AG04450 (cell line): ENCODE measurements at regions of chr9 and their contacts with region 1.

Region 1: GRCh38 chr9:4762108-4762885 is 21.3 kb upstream of the AK3 start:
- DNase-seq: peak; percentile 44
- H3K4me3 ChIP-seq: no peak overlapping the region
- H3K27ac ChIP-seq: no peak overlapping the region
- H3K27me3 ChIP-seq: peaks cover 8% of the 10 kb centered on the region
- CTCF ChIP-seq: peak; percentile 80

Region 2: DNA sequence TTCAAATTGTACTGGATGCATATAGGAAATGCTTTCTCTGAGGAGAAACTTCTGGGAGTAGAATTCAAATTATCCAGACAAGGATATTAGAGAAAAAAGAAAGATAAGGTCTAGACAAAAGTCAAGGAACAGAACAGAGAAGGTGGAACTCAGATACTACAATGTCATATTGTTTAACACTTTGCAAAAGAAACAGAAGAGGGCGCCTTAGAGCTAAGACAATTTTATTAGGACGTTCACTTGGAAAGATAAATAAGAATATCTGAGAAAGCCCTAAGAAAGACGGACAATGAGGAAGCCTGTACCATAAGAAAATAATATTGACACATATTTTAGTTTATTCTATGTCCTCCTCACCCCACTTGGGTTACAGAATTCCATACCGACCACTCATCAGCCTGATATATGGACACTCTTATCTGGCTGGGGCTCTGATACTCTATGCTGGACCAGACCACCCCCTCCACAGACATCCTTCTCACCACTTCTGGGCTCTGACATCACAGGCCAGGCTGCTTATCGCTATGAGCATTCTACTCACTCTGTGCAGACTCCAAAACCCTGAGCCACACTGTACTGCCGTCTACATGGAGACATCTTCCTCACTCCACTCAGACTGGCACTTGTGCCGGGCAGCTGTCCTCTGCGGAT is 12.1 kb before region 1 on chr9:
- CTCF ChIA-PET with region 1: interaction called, 22 read pairs
- POLR2A ChIA-PET with region 1: no interaction called
- DNase-seq: peak; percentile 11
- H3K4me3 ChIP-seq: no peak overlapping the region
- H3K27ac ChIP-seq: no peak overlapping the region
- H3K27me3 ChIP-seq: no peaks in the 10 kb centered on the region
- CTCF ChIP-seq: peak; percentile 62

Region 3: DNA sequence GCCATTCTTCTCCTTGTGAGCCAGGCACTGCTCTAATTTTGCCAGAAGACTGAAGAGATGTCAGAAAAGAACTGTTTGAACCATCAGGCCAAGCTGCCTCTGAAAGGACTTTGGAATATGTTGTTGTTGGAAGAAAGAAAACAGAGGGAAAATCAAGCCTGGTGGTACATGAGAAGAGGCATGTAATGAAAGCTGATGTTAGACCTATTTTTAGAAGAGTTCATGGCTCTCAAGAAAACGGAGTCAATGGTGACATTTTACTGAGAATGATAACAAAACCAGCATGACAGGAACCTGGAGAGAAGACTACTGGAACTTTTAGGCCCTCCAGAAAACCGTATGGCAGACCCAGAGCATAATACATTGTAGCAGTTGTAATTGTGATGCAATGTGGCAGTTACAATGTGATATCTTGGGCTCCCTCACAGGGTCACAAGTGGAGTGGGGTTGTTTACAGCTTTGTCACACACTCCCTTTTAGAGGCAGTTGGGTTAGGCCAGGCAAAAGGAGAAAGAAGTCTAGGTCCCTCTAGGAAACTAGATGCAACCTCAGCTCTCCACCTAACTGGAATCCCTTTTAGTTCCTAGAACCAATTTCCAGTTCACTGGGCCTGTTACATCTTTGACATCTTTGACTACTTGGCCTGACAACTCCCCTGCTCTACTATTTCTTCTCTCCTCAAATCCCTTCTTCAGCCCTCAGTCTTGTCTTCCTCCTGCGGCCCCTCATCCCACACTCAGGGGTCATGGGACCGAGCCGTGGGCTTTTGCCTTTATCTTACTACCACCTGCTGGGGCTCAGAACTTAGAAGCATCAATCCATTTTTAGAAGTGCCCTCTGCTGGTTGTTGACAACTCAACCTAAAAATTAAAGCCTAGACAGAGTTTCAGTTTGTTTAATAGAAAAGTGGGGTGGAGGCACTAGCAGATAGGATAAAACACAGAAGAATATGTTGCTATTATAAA is 161.6 kb after region 1 on chr9:
- CTCF ChIA-PET with region 1: interaction called, 59 read pairs
- POLR2A ChIA-PET with region 1: no interaction called
- DNase-seq: no peak
- H3K4me3 ChIP-seq: no peak overlapping the region
- H3K27ac ChIP-seq: no peak overlapping the region
- H3K27me3 ChIP-seq: no peaks in the 10 kb centered on the region
- CTCF ChIP-seq: peak; percentile 58

Region 4: GRCh38 chr9:4939118-4939561 is 176.8 kb after region 1 on chr9:
- CTCF ChIA-PET with region 1: interaction called, 11 read pairs
- POLR2A ChIA-PET with region 1: no interaction called
- DNase-seq: no peak
- H3K4me3 ChIP-seq: no peak overlapping the region
- H3K27ac ChIP-seq: no peak overlapping the region
- H3K27me3 ChIP-seq: no peaks in the 10 kb centered on the region
- CTCF ChIP-seq: no peak

Region 5: DNA sequence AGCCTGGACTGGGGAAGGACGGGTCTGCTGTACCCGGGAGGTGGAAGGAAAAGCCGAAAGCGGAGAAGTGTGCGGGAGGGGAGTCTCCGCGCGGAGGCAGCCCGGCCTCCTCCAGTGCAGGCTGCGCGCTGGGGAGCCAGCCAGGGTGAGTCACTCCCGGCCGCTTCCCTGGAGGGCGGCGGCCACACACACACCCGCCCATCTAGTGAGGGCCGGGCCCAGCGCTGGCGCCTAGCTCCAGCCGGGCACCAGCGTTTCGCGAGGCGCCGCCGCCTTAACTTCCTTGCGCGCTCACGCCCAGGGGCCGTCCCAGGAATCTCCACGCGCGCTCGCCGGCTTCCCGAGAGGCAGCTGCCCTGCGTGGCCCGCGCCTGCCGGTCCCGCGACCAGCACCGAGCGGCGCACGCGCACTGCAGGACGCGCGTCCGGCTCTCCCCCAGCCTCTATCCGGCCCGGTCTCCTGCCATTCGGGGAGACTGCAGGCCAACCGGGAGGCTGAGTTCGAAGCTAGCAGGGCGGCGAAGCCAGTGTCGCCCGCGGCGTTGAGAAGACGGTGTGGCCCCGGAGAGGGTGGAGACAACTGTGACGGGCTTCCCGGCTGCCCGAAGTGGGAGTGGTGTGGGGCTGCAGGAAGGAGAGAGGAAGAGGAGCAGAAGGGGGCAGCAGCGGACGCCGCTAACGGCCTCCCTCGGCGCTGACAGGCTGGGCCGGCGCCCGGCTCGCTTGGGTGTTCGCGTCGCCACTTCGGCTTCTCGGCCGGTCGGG is 222.5 kb after region 1 on chr9 and contains the start of gene JAK2:
- CTCF ChIA-PET with region 1: interaction called, 54 read pairs
- POLR2A ChIA-PET with region 1: no interaction called
- DNase-seq: peak; percentile 79
- H3K4me3 ChIP-seq: peak within 1 kb of the TSS; percentile 79
- H3K27ac ChIP-seq: peak within 1 kb of the TSS; percentile 95
- H3K27me3 ChIP-seq: no peaks in the 10 kb centered on the region
- CTCF ChIP-seq: peak; percentile 42
- polyA plus RNA-seq, gene JAK2: 6.1 and 9.2 TPM in 2 replicates

Region 6: DNA sequence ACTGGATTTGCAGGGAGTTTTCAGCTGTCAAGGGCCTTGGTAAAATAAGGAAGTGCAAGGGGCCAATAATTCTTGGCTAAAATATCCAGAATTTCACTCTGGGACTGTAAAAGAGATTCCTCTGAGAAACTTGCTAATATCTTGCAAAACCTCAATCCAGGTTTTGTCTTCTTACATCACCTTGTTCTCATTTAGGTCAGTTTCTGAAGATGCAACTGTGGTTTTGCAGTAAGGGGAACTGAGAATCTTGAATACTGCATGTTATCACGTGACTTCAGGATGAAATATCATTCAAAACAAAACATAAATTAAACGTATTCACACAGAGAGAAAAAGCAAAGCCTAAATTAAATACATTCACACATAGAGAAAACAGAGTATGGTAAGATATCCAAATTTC is 831.6 kb after region 1 on chr9:
- CTCF ChIA-PET with region 1: interaction called, 18 read pairs
- POLR2A ChIA-PET with region 1: no interaction called
- DNase-seq: no peak
- H3K4me3 ChIP-seq: no peak overlapping the region
- H3K27ac ChIP-seq: no peak overlapping the region
- H3K27me3 ChIP-seq: no peaks in the 10 kb centered on the region
- CTCF ChIP-seq: no peak